MCF 10A (cell line): ENCODE measurements at regions of chr10 and their contacts with region 1.

Region 1: GRCh38 chr10:115795964-115796363 is 477.0 kb downstream of the GFRA1 start:
- DNase-seq: no peak
- H3K4me3 Mint-ChIP-seq: no peak overlapping the region
- H3K27ac Mint-ChIP-seq: no peak overlapping the region
- H3K4me1 Mint-ChIP-seq: no peaks in the 10 kb centered on the region
- H3K27me3 Mint-ChIP-seq: no peaks in the 10 kb centered on the region
- CTCF ChIP-seq: no peak

Region 2: DNA sequence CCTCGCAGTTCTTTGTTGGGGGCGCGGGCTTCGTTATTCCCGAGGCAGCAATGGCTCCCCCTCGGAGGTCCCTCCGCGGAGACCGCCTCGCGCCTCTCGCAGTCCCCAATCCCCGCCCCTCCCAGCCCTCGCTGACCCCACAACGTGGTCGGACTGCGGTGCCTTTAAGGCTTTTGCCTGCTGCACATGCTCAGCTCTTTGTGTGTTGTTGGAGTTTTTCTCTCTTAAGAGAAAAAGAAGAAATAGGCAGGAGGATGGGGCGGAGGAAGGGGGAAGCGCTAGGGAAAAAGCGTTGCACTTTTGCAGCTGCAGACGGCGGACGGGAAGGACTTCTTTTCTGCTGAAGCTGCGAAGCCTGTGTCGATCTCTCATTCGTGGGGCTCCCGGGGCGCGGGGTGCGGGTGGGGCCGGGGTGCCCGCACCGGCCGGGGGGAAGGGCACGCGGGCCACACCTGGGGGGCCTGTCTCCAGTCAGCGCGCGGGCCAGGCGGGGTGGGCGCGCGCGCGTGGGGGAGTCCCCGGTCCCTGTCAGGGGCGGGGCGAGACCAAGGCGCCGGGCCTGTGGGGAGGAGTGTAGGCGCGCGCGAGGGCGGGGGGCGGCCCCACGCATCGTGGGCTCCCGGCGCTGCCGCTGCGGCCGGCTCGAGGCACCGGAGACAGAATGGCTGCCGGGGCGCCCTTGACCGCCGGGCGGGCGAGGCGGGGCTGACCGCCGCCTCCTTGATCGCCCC is 703.2 kb before region 1 on chr10:
- CTCF ChIA-PET with region 1: no interaction called
- POLR2A ChIA-PET with region 1: no interaction called
- intact Hi-C with region 1: no loop called
- DNase-seq: no peak
- H3K4me3 Mint-ChIP-seq: peak overlapping the region; percentile 35
- H3K27ac Mint-ChIP-seq: no peak overlapping the region
- H3K4me1 Mint-ChIP-seq: no peaks in the 10 kb centered on the region
- H3K27me3 Mint-ChIP-seq: peaks cover 57% of the 10 kb centered on the region
- CTCF ChIP-seq: no peak

Region 3: GRCh38 chr10:115696747-115697146 is 99.2 kb before region 1 on chr10:
- CTCF ChIA-PET with region 1: no interaction called
- POLR2A ChIA-PET with region 1: no interaction called
- intact Hi-C with region 1: no loop called
- DNase-seq: no peak
- H3K4me3 Mint-ChIP-seq: no peak overlapping the region
- H3K27ac Mint-ChIP-seq: no peak overlapping the region
- H3K4me1 Mint-ChIP-seq: no peaks in the 10 kb centered on the region
- H3K27me3 Mint-ChIP-seq: no peaks in the 10 kb centered on the region
- CTCF ChIP-seq: no peak

Region 4: GRCh38 chr10:115948465-115948864 is 152.5 kb after region 1 on chr10:
- CTCF ChIA-PET with region 1: interaction called, 3 read pairs
- POLR2A ChIA-PET with region 1: no interaction called
- intact Hi-C with region 1: loop called (anchors 5 kb)
- DNase-seq: peak; percentile 37
- H3K4me3 Mint-ChIP-seq: no peak overlapping the region
- H3K27ac Mint-ChIP-seq: no peak overlapping the region
- H3K4me1 Mint-ChIP-seq: peaks cover 14% of the 10 kb centered on the region
- H3K27me3 Mint-ChIP-seq: no peaks in the 10 kb centered on the region
- CTCF ChIP-seq: peak; percentile 26

Region 5: GRCh38 chr10:116268976-116269375 is 473.0 kb after region 1 on chr10:
- CTCF ChIA-PET with region 1: interaction called, 4 read pairs
- POLR2A ChIA-PET with region 1: no interaction called
- intact Hi-C with region 1: loop called (anchors 5 kb)
- DNase-seq: peak; percentile 26
- H3K4me3 Mint-ChIP-seq: no peak overlapping the region
- H3K27ac Mint-ChIP-seq: no peak overlapping the region
- H3K4me1 Mint-ChIP-seq: peaks cover 7% of the 10 kb centered on the region
- H3K27me3 Mint-ChIP-seq: peaks cover 10% of the 10 kb centered on the region
- CTCF ChIP-seq: peak; percentile 16